Naive thymus-derived CD8-positive, alpha-beta T cell (primary cell): ENCODE measurements at regions of chr6 and their contacts with region 1.

Region 1: DNA sequence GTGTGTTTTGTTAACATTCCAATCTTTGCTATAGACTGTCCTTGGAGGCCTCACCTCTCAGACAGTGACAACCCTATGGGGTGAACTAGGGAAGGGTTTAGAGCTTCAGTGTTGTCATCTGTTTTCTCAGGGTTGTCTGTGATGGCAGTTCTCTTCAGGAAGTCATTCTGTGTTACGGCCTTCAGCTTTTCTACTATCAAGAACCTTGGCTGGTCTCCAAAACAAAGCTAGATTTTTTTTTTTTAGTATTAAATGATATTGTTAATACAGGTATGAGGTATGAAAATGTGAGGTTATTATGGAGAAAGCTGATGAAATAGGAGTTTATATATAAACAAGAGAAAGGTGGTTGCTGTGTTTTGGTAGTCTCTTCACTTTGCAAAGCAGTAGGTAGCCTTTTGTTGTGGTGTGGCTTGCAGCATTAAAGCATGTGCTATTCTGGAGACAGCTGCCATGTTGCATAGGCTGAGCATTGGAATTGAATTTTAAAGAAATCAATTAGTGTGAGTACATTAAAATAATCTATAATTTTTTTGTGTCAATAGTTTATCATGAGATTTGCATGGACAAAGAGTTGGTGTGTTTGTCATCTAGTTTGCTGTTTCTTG is 162.6 kb downstream of the CARMIL1 start:
- DNase-seq: peak in 7 of 10 donors; percentile 10 to 72 (median 48)
- ATAC-seq: peak; percentile 92 to 93
- H3K4me3 Mint-ChIP-seq: peak overlapping the region in 9 of 10 donors; percentile 5 to 78 (median 66)
- H3K27ac Mint-ChIP-seq: peak overlapping the region in 7 of 10 donors; percentile 92 to 98 (median 95)
- H3K4me1 Mint-ChIP-seq: peaks cover 6 to 36% (median 23%) of the 10 kb centered on the region in 4 donors
- H3K27me3 Mint-ChIP-seq: no peaks in the 10 kb centered on the region

Region 2: GRCh38 chr6:25312703-25313501 is 128.9 kb before region 1 on chr6:
- POLR2A ChIA-PET with region 1: no interaction called
- DNase-seq: no peak
- ATAC-seq: no peak
- H3K4me3 Mint-ChIP-seq: no peak overlapping the region
- H3K27ac Mint-ChIP-seq: peak overlapping the region in 1 of 10 donors; percentile 6
- H3K4me1 Mint-ChIP-seq: peaks cover 19 to 49% (median 31%) of the 10 kb centered on the region in 4 donors
- H3K27me3 Mint-ChIP-seq: no peaks in the 10 kb centered on the region

Region 3: GRCh38 chr6:25404693-25405169 is 37.0 kb before region 1 on chr6:
- POLR2A ChIA-PET with region 1: interaction called, 21 read pairs
- DNase-seq: peak in 9 of 10 donors; percentile 0 to 68 (median 23)
- ATAC-seq: peak; percentile 89 to 90
- H3K4me3 Mint-ChIP-seq: no peak overlapping the region
- H3K27ac Mint-ChIP-seq: no peak overlapping the region
- H3K4me1 Mint-ChIP-seq: peaks cover 0 to 28% (median 6%) of the 10 kb centered on the region in 4 donors
- H3K27me3 Mint-ChIP-seq: no peaks in the 10 kb centered on the region

Region 4: DNA sequence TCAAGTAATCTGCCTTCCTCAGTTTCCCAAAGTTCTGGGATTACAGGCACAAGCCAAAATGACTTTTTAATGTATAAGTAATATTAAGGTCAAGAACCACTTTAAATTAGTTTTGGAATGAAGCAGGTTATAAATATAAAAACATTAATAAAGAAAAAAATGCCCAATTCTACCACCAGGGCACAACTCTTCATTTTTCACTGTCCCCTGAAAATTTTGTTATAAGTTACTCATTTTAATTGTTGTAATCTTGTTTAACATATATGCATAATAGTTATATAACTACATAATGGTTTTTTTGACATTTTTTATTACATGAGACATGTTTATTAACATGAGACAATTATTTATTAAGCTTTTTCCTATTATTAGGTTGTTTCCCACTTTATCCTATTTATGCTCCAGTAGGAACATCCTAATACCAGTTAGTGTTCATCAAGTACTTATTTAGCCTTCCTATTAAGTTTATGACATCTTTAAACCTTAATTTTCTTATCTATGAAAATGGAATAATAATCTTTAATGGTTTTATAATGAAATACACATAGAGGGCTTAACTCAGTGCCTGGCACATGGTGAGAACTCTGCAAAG is 28.1 kb after region 1 on chr6:
- POLR2A ChIA-PET with region 1: no interaction called
- DNase-seq: no peak
- ATAC-seq: no peak
- H3K4me3 Mint-ChIP-seq: no peak overlapping the region
- H3K27ac Mint-ChIP-seq: no peak overlapping the region
- H3K4me1 Mint-ChIP-seq: peaks cover 0 to 7% (median 3%) of the 10 kb centered on the region in 4 donors
- H3K27me3 Mint-ChIP-seq: no peaks in the 10 kb centered on the region

Region 5: GRCh38 chr6:25564943-25565342 is 123.2 kb after region 1 on chr6:
- POLR2A ChIA-PET with region 1: no interaction called
- DNase-seq: no peak
- ATAC-seq: no peak
- H3K4me3 Mint-ChIP-seq: no peak overlapping the region
- H3K27ac Mint-ChIP-seq: peak overlapping the region in 1 of 10 donors; percentile 3
- H3K4me1 Mint-ChIP-seq: peaks cover 0 to 1% (median 0%) of the 10 kb centered on the region in 4 donors
- H3K27me3 Mint-ChIP-seq: no peaks in the 10 kb centered on the region

Region 6: DNA sequence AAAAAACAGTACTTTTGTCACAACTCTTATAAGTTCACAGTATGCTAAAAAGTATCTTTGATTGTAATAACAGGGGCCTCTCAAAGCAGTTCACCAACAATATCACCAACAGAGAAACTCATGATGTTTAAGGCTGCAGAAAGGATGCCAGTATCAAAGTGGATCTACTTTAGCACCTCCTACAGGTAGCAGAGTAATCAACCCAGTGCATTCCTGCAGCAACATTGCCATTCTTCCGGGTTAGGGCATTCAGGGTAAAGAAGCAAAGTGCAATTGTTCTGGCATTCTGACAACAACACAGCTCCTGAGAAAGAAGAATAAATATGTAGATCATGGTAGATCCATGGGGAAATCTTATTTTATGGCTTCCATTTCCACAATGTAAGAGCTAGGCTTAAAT is 305.2 kb after region 1 on chr6:
- POLR2A ChIA-PET with region 1: no interaction called
- DNase-seq: no peak
- ATAC-seq: no peak
- H3K4me3 Mint-ChIP-seq: no peak overlapping the region
- H3K27ac Mint-ChIP-seq: no peak overlapping the region
- H3K4me1 Mint-ChIP-seq: peaks cover 0 to 4% (median 0%) of the 10 kb centered on the region in 4 donors
- H3K27me3 Mint-ChIP-seq: no peaks in the 10 kb centered on the region